B cell (primary cell): ENCODE measurements at regions of chr1 and their contacts with region 1.

Region 1: DNA sequence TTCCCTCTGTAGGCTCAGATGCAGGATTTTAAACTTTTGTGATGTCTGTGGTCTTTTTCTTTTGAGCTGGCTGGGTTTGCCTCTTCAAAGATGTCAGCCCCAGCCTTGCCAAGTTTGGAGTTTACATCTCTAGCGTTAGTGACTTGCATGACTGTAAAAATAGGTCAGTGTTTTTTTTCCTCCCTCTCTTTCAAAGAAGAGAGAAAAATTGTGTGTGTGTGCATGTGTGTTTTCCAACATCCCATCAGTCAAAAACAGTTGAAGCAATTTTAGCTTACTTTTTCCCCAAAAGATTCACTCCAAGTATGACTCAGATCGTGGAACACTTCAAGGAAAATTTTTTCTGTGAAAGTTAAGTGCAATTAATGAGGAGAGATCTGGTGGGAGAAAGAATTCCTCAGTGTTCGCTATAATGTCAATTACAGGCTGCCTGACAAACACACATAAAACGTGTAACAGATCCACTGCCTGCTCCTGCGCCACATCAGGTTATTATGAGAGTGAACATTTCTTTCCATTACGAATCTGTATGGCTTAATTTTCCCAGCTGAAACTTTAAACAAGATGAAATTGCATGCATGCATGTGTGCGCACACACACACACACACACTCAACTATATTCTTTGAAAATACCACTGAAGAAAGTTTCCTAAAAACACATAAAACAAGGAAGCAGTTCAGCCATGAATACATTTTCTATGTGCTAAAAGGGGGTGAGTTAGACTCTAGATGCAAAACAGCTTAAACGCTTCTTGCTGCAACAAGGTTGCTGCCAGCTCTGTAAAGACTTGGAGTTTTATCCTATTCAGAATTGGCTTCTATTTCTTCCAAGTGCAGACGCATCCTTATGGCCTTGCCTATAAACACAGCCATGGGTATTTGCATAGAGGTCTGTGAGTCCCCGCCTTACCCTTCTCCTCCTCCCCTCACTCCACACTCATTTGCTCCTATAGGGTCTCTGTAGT is 55.5 kb downstream of the TLR5 start:
- DNase-seq: no peak
- ATAC-seq: no peak
- H3K4me3 ChIP-seq: no peak overlapping the region
- H3K4me3 Mint-ChIP-seq: no peak overlapping the region
- H3K27ac ChIP-seq: no peak overlapping the region
- H3K27ac Mint-ChIP-seq: no peak overlapping the region
- H3K4me1 ChIP-seq: peaks cover 0 to 3% of the 10 kb centered on the region in 2 donors
- H3K4me1 Mint-ChIP-seq: no peaks in the 10 kb centered on the region
- H3K27me3 ChIP-seq: no peaks in the 10 kb centered on the region
- H3K27me3 Mint-ChIP-seq: no peaks in the 10 kb centered on the region
- CTCF ChIP-seq: no peak

Region 2: GRCh38 chr1:222465211-222466041 is 622.1 kb before region 1 on chr1:
- CTCF ChIA-PET with region 1: interaction called, 11 read pairs
- POLR2A ChIA-PET with region 1: no interaction called
- intact Hi-C with region 1: no loop called
- DNase-seq: peak; percentile 92
- ATAC-seq: peak; percentile 95
- H3K4me3 ChIP-seq: peak overlapping the region; percentile 36 to 82 (median 72)
- H3K4me3 Mint-ChIP-seq: peak overlapping the region; percentile 92
- H3K27ac ChIP-seq: peak overlapping the region; percentile 77 to 84
- H3K27ac Mint-ChIP-seq: peak overlapping the region; percentile 96
- H3K4me1 ChIP-seq: peaks cover 3 to 15% of the 10 kb centered on the region in 2 donors
- H3K4me1 Mint-ChIP-seq: peaks cover 13% of the 10 kb centered on the region
- H3K27me3 ChIP-seq: peaks cover 0 to under 1% (median 0%) of the 10 kb centered on the region in 4 experiments
- H3K27me3 Mint-ChIP-seq: peaks cover 13% of the 10 kb centered on the region
- CTCF ChIP-seq: peak; percentile 100

Region 3: DNA sequence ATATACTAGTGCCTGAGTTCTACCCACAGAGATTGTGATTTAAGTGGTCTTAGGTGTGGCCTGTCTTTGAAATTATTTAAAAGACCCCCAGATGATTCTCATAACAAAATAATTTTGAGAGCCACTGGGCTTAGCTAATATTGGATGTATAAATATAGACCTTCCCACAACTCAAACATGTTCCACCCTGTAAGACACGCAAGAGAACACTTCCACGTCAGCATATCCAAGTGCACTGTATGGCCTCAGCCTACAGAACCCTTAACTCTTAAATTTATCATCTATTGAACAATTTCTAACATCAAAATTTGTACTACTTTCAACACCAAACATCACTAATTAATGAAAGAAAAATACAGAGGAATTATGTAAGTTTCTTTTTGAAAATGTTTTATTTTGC is 348.1 kb before region 1 on chr1:
- CTCF ChIA-PET with region 1: interaction called, 29 read pairs
- POLR2A ChIA-PET with region 1: interaction called, 3 read pairs
- intact Hi-C with region 1: no loop called
- DNase-seq: no peak
- ATAC-seq: no peak
- H3K4me3 ChIP-seq: peak overlapping the region; percentile 17 to 53 (median 33)
- H3K4me3 Mint-ChIP-seq: no peak overlapping the region
- H3K27ac ChIP-seq: peak overlapping the region; percentile 50 to 77
- H3K27ac Mint-ChIP-seq: no peak overlapping the region
- H3K4me1 ChIP-seq: peaks cover 58 to 61% of the 10 kb centered on the region in 2 donors
- H3K4me1 Mint-ChIP-seq: peaks cover 44% of the 10 kb centered on the region
- H3K27me3 ChIP-seq: no peaks in the 10 kb centered on the region
- H3K27me3 Mint-ChIP-seq: no peaks in the 10 kb centered on the region
- CTCF ChIP-seq: no peak

Region 4: DNA sequence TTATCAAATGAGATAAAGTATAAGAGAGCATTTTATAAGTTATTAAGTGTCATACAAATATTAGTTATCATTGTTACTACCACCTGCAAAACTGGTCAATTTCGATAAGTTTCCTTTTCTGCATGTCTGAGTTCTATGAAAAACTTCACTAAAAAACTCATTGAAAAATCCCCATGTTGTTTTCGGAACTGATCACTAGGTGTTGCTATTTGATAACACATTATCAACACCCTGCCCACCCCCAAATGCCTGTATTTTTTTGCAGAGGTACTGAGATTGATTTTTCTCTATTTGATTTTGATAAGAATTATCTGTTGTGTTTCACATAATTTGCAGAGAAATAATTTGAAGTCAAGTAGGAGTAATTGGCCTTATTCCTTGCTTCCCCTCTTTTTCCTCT is 294.8 kb before region 1 on chr1:
- CTCF ChIA-PET with region 1: interaction called, 120 read pairs
- POLR2A ChIA-PET with region 1: no interaction called
- intact Hi-C with region 1: loop called (anchors 1 kb)
- DNase-seq: peak; percentile 54
- ATAC-seq: peak; percentile 54
- H3K4me3 ChIP-seq: no peak overlapping the region
- H3K4me3 Mint-ChIP-seq: no peak overlapping the region
- H3K27ac ChIP-seq: no peak overlapping the region
- H3K27ac Mint-ChIP-seq: peak overlapping the region; percentile 47
- H3K4me1 ChIP-seq: peaks cover 16 to 21% of the 10 kb centered on the region in 2 donors
- H3K4me1 Mint-ChIP-seq: peaks cover 40% of the 10 kb centered on the region
- H3K27me3 ChIP-seq: no peaks in the 10 kb centered on the region
- H3K27me3 Mint-ChIP-seq: no peaks in the 10 kb centered on the region
- CTCF ChIP-seq: peak; percentile 69

Region 5: DNA sequence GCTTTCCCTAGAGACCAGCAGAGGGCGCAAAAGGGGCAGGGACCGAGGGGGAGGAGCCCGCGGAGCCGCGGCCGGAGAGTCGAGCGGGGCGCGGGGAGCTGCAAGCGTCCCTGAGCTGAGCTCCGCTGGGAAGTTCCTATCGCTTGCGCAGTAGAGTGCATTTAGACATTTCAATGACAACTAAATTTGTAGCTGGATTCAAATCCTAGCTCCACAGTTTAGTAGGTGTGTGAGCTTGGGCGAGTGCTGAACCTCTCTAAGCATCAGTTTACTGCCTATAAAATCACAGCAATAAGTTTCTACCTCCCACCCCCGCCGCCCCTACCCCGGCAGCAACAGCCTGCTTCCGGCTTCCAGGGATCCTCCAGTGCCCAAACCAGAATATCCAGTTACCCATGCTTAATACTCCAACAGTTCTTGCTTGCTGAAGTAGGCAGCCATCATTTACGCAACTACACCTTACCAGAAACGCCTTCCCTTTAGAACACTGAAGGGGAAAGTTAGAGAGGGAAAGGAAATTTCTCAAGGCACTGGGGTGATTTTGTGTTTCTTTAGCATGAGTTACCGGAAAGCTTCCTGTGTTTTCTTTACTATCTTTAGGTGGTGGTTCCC is 46.4 kb after region 1 on chr1:
- CTCF ChIA-PET with region 1: interaction called, 10 read pairs
- POLR2A ChIA-PET with region 1: no interaction called
- intact Hi-C with region 1: no loop called
- DNase-seq: peak; percentile 83
- ATAC-seq: peak; percentile 92
- H3K4me3 ChIP-seq: peak overlapping the region; percentile 13 to 58 (median 19)
- H3K4me3 Mint-ChIP-seq: peak overlapping the region; percentile 83
- H3K27ac ChIP-seq: no peak overlapping the region
- H3K27ac Mint-ChIP-seq: no peak overlapping the region
- H3K4me1 ChIP-seq: peaks cover 16 to 19% of the 10 kb centered on the region in 2 donors
- H3K4me1 Mint-ChIP-seq: peaks cover 22% of the 10 kb centered on the region
- H3K27me3 ChIP-seq: peaks cover 0 to 54% (median 30%) of the 10 kb centered on the region in 4 experiments
- H3K27me3 Mint-ChIP-seq: peaks cover 84% of the 10 kb centered on the region
- CTCF ChIP-seq: peak; percentile 12

Region 6: DNA sequence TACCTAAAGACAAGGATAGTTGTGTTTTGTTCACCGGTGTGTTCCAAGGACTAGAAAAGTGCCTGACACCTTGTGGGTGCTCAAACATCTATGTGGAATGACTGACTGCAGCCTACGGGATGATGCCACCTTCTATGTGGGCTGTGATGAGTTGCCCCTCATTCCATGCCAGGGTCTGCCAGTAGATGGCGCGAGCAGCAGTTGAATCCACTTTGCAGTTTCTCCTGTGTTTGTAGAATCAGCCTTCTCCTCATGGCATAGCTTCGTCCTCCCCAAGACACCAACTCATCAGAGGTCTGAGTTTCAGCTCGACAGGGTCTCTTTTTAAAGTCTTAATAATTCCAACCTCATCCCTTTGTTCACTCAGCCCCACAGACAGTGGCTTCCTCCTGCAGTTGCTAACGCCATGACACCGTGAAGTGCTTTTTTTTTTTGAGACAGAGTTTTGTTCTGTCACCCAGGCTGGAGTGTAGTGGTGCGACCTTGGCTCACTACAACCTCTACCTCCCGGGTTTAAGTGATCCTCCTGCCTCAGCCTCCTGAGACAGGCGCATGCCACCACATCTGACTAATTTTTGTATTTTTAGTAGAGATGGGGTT is 444.3 kb after region 1 on chr1:
- CTCF ChIA-PET with region 1: no interaction called
- POLR2A ChIA-PET with region 1: no interaction called
- intact Hi-C with region 1: no loop called
- DNase-seq: no peak
- ATAC-seq: no peak
- H3K4me3 ChIP-seq: no peak overlapping the region
- H3K4me3 Mint-ChIP-seq: no peak overlapping the region
- H3K27ac ChIP-seq: no peak overlapping the region
- H3K27ac Mint-ChIP-seq: no peak overlapping the region
- H3K4me1 ChIP-seq: no peaks in the 10 kb centered on the region
- H3K4me1 Mint-ChIP-seq: no peaks in the 10 kb centered on the region
- H3K27me3 ChIP-seq: peaks cover 0 to 6% (median 0%) of the 10 kb centered on the region in 4 experiments
- H3K27me3 Mint-ChIP-seq: peaks cover 33% of the 10 kb centered on the region
- CTCF ChIP-seq: peak; percentile 33